ENCODE measurements at regions of chr7 and their contacts with region 1.

Region 1: DNA sequence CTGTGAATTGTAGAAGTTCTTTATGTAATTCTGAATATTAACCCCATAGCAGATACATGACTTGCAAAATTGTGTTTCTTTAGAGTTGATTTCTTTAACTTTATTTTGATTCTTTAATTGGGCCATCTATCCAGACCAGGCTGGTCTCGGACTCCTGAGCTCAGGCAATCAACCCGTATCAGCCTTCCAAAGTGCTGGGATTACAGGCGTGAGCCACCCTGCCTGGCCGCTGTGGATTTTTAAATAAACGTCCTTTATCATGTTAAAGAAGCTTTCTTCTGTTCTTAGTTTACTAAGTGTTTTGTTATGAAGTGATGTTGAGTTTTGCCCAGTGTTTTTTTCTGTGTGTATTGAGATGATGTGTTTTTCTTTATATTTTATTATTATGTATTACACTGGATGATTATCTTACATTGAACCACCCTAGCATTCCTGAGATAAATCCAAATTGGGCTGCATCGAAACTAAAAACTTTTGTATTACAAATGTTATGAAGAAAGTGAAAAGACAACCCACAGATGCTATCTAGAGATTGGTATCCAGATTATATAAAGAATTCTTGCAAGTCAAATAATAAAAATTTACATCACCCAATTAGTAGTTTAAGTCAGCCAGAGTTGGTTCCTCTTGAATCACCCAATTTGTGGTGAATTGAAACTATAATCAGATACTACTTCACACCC is 118.1 kb downstream of the TPST1 start:
- DNase-seq: no peak
- H3K4me3 ChIP-seq: no peak overlapping the region
- H3K27ac ChIP-seq: no peak overlapping the region
- H3K4me1 ChIP-seq: peaks cover 5% of the 10 kb centered on the region; the same call in 1 of the 2 replicates
- H3K27me3 ChIP-seq: no peaks in the 10 kb centered on the region
- CTCF ChIP-seq: no peak

Region 2: GRCh38 chr7:66307591-66308215 is 15.6 kb before region 1 on chr7:
- CTCF ChIA-PET with region 1: no interaction called
- POLR2A ChIA-PET with region 1: interaction called, 10 read pairs
- intact Hi-C with region 1: no loop called
- DNase-seq: peak in 1 of 2 experiments; percentile 36
- H3K4me3 ChIP-seq: no peak overlapping the region
- H3K27ac ChIP-seq: no peak overlapping the region
- H3K4me1 ChIP-seq: peaks cover 24% of the 10 kb centered on the region
- H3K27me3 ChIP-seq: no peaks in the 10 kb centered on the region
- CTCF ChIP-seq: no peak

Measured in PC-9 (cell line).